Left cardiac atrium (tissue), 4 donors: ENCODE measurements at regions of chr4 and their contacts with region 1.

Region 1: GRCh38 chr4:46931981-46932380 is 22.9 kb upstream of the COX7B2 start:
- DNase-seq: peak; percentile 24
- ATAC-seq: peak; percentile 76 to 84

Region 2: GRCh38 chr4:46781434-46782092 is 150.4 kb before region 1 on chr4:
- intact Hi-C with region 1: no loop called
- DNase-seq: no peak
- ATAC-seq: no peak

Region 3: GRCh38 chr4:46818604-46819003 is 113.4 kb before region 1 on chr4:
- intact Hi-C with region 1: no loop called
- DNase-seq: no peak
- ATAC-seq: no peak

Region 4: GRCh38 chr4:47032415-47033106 is 100.6 kb after region 1 on chr4:
- intact Hi-C with region 1: loop called in 1 of 2 experiments (anchors 2 kb)
- DNase-seq: peak; percentile 80
- ATAC-seq: peak; percentile 94 to 98

Region 5: DNA sequence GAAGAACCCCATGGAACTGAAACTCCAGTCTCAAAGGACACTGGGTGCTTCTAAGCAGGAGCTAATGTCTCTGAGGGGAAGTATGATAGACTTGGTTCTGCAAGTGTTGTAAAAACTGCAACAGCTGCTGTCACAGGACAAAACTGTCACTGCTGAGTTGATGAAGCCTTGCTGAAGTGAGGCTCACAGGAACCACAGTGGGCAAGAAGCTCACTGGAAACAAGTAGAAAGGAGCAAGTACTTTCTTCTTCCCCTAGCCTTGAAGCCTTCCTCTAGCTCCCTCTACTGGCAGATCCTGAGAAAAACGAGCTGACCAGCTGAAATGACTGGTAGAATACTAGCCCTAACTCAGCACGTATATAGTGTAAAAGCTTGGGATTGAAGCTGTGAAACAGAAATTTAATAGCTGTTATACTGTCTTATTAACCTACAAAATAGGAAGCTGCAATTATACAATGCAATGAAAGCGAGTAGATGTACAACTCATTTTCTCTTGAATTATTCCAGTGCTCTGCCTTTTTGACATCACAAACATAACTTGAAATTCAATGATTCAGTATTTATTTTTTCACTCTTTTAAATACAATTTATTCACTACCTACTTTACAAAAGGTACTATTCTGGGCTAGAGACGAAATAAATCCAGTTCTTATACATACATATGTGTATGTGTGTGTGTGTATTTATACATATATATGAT is 190.8 kb after region 1 on chr4:
- intact Hi-C with region 1: loop called in 1 of 2 experiments (anchors 10 kb)
- DNase-seq: peak; percentile 22
- ATAC-seq: peak; percentile 62 to 65

Region 6: GRCh38 chr4:47383829-47384427 is 451.9 kb after region 1 on chr4:
- intact Hi-C with region 1: loop called in 1 of 2 experiments (anchors 5 kb)
- DNase-seq: no peak
- ATAC-seq: peak in 1 of 2 donors; percentile 44